B cell (primary cell): ENCODE measurements at regions of chr12 and their contacts with region 1.

Region 1: DNA sequence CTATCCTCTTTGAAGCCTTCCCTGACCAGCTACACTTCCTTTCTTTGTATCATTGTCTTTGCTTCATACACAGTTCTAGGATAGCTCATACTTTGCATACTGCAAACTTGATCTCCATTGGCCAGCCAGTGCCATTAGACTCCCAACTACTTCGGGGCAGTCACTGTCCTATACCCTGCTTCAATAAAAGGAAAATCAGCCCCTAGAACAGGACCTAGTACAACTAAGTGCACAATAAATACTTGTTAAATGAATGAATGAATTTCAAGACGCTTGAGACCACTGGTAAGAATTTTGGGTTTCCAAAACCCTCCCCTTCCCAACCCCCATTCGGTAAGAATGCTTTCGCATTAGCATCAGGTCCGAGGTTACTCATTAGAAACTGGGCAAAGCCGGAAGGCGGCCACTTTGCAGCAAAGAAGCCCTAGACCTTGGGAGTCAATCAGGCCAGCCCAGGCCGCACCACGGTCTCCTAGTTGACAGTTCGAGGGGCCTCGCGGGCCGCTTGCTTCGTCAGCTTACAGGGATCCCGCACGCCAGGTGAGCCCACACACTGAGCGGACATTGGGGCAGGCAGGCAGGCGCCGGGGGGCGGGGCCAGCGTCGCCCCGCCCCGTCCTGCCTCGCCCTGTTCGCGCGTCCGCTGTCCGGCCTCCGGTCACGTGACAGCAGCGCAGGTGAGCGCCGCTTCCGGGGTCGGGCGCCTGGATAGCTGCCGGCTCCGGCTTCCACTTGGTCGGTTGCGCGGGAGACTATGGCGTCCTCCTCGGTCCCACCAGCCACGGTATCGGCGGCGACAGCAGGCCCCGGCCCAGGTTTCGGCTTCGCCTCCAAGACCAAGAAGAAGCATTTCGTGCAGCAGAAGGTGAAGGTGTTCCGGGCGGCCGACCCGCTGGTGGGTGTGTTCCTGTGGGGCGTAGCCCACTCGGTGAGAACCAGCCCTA is at the start of gene PIP4K2C:
- DNase-seq: peak; percentile 89
- ATAC-seq: peak; percentile 98
- H3K4me3 ChIP-seq: peak within 1 kb of the TSS; percentile 70 to 97 (median 78)
- H3K4me3 Mint-ChIP-seq: peak within 1 kb of the TSS; percentile 89
- H3K27ac ChIP-seq: peak within 1 kb of the TSS; percentile 50 to 63
- H3K27ac Mint-ChIP-seq: peak within 1 kb of the TSS; percentile 81
- H3K4me1 ChIP-seq: peaks cover 14 to 21% of the 10 kb centered on the region in 2 donors
- H3K4me1 Mint-ChIP-seq: peaks cover 26% of the 10 kb centered on the region
- H3K27me3 ChIP-seq: peaks cover 0 to 17% (median 7%) of the 10 kb centered on the region in 4 experiments
- H3K27me3 Mint-ChIP-seq: peaks cover 3% of the 10 kb centered on the region
- CTCF ChIP-seq: no peak
- total RNA-seq, gene PIP4K2C: 20.1 and 24.7 TPM in 2 replicates

Region 2: DNA sequence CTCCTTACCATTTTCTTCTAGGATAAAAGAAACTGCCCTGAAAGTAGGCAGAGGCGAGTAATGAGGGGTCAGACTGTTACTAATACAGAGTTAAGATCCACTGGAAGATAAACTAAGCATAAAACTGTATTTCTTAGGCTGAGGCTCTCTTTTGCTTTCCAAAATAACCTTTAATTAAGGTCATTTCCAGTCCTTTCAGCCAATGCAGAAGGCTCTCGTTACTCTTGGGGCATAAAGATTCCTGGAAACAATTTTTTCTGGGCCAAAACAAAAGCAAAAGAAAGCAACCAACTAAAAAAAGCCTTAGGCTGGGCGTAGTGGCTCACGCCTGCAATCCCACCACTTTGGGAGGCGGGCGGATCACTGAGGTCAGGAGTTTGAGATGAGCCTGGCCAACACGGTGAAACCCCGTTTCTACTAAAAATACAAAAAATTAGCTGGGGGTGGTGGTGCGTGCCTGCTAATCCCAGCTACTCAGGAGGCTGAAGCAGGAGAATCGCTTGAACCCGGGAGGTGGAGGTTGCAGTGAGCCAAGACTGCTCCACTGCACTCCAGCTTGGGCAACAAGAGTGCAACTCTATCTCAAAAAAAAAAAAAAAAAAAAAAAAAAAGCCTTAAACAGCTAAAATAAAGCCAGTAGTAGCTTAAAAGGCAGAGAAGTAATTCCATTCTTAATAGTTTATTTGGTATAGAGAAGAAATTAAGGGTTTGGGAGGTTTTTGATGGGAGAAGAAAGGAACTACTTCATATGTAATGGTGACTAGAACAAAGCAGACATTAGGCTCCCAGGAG is 270.9 kb before region 1 on chr12:
- CTCF ChIA-PET with region 1: no interaction called
- POLR2A ChIA-PET with region 1: no interaction called
- intact Hi-C with region 1: no loop called
- DNase-seq: no peak
- ATAC-seq: no peak
- H3K4me3 ChIP-seq: no peak overlapping the region
- H3K4me3 Mint-ChIP-seq: no peak overlapping the region
- H3K27ac ChIP-seq: no peak overlapping the region
- H3K27ac Mint-ChIP-seq: no peak overlapping the region
- H3K4me1 ChIP-seq: no peaks in the 10 kb centered on the region
- H3K4me1 Mint-ChIP-seq: peaks cover 2% of the 10 kb centered on the region
- H3K27me3 ChIP-seq: no peaks in the 10 kb centered on the region
- H3K27me3 Mint-ChIP-seq: no peaks in the 10 kb centered on the region
- CTCF ChIP-seq: no peak

Region 3: DNA sequence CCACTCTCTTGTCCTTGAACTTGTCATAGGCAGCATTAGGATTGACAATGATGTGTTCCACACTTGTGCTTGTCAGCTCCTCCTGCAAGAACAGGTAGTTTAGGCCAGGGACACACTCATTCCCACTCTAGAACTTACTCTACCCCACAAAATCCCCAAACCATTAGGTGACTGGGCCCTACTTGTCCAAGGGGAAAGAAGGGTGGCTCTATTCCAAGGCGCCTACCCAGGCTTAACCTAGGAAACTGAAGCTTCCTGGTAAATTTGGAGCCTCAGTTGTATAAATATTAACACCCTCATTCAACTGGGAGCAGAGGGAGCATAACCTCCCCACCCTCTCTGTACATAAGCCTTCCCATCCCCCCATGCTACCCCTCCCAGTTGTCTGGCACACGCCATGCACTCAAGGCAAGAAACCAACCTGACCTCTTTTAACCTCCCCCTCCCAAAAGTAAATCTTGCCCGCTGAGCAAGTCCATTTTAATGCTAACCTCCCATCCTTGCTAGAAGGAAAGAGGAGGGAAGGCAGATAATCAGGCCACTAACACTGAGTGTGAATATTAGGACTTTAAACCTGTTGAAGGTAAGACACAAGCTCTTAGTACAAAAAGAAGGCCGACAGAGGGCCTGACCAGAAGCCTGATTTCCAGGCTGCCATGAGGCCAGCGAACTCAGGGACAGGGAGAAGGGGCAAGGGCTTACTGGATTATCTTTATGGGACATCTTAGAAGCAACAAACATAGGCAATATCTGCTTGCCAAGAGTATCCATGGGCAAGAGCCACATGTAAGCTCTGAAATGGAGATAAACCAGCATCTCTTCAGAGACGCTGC is 54.8 kb before region 1 on chr12:
- CTCF ChIA-PET with region 1: no interaction called
- POLR2A ChIA-PET with region 1: no interaction called
- intact Hi-C with region 1: no loop called
- DNase-seq: no peak
- ATAC-seq: no peak
- H3K4me3 ChIP-seq: no peak overlapping the region
- H3K4me3 Mint-ChIP-seq: no peak overlapping the region
- H3K27ac ChIP-seq: no peak overlapping the region
- H3K27ac Mint-ChIP-seq: no peak overlapping the region
- H3K4me1 ChIP-seq: no peaks in the 10 kb centered on the region
- H3K4me1 Mint-ChIP-seq: no peaks in the 10 kb centered on the region
- H3K27me3 ChIP-seq: no peaks in the 10 kb centered on the region
- H3K27me3 Mint-ChIP-seq: no peaks in the 10 kb centered on the region
- CTCF ChIP-seq: no peak

Region 4: GRCh38 chr12:57546438-57547383 is 44.1 kb before region 1 on chr12 and contains the start of gene DCTN2:
- CTCF ChIA-PET with region 1: no interaction called
- POLR2A ChIA-PET with region 1: no interaction called
- intact Hi-C with region 1: loop called (anchors 1 kb)
- DNase-seq: peak; percentile 94
- ATAC-seq: peak; percentile 97
- H3K4me3 ChIP-seq: peak within 1 kb of the TSS; percentile 68 to 96 (median 85)
- H3K4me3 Mint-ChIP-seq: peak within 1 kb of the TSS; percentile 99
- H3K27ac ChIP-seq: peak within 1 kb of the TSS; percentile 58 to 90
- H3K27ac Mint-ChIP-seq: peak within 1 kb of the TSS; percentile 87
- H3K4me1 ChIP-seq: peaks cover 21 to 27% of the 10 kb centered on the region in 2 donors
- H3K4me1 Mint-ChIP-seq: peaks cover 51% of the 10 kb centered on the region
- H3K27me3 ChIP-seq: peaks cover 0 to 26% (median 10%) of the 10 kb centered on the region in 4 experiments
- H3K27me3 Mint-ChIP-seq: peaks cover 18% of the 10 kb centered on the region
- CTCF ChIP-seq: no peak
- total RNA-seq, gene DCTN2: 94.3 and 97.6 TPM in 2 replicates

Region 5: DNA sequence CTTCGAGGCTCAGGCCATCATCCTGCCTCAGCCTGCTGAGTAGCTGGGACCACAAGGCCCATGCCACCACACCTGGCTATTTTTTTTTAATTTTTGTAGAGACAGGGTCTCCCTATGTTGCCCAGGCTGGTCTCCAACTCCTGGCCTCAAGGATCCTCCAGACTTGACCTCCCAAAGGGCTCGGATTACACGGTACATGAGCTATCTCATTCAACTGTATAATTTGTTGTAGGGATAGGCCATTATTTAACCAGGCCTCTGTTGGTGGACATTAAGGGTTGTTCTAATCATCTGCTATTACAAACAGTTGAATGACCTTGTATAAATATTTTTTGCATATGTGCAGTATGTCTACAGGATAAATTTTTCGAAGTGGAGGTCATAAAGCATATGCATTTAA is 31.9 kb before region 1 on chr12:
- CTCF ChIA-PET with region 1: no interaction called
- POLR2A ChIA-PET with region 1: no interaction called
- intact Hi-C with region 1: no loop called
- DNase-seq: no peak
- ATAC-seq: no peak
- H3K4me3 ChIP-seq: no peak overlapping the region
- H3K4me3 Mint-ChIP-seq: no peak overlapping the region
- H3K27ac ChIP-seq: no peak overlapping the region
- H3K27ac Mint-ChIP-seq: no peak overlapping the region
- H3K4me1 ChIP-seq: no peaks in the 10 kb centered on the region
- H3K4me1 Mint-ChIP-seq: no peaks in the 10 kb centered on the region
- H3K27me3 ChIP-seq: peaks cover 0 to 10% (median 2%) of the 10 kb centered on the region in 4 experiments
- H3K27me3 Mint-ChIP-seq: peaks cover 23% of the 10 kb centered on the region
- CTCF ChIP-seq: no peak

Region 6: GRCh38 chr12:57611108-57611809 is 20.5 kb after region 1 on chr12 and contains the start of gene ARHGEF25:
- CTCF ChIA-PET with region 1: interaction called, 97 read pairs
- POLR2A ChIA-PET with region 1: interaction called, 4 read pairs
- intact Hi-C with region 1: loop called (anchors 2 kb)
- DNase-seq: no peak
- ATAC-seq: peak; percentile 26
- H3K4me3 ChIP-seq: peak within 1 kb of the TSS in 4 of 5 experiments; percentile 34 to 62 (median 50)
- H3K4me3 Mint-ChIP-seq: peak within 1 kb of the TSS; percentile 81
- H3K27ac ChIP-seq: no peak within 1 kb of the TSS
- H3K27ac Mint-ChIP-seq: no peak within 1 kb of the TSS
- H3K4me1 ChIP-seq: peaks cover 52 to 59% of the 10 kb centered on the region in 2 donors
- H3K4me1 Mint-ChIP-seq: peaks cover 53% of the 10 kb centered on the region
- H3K27me3 ChIP-seq: peaks cover 0 to 71% (median 33%) of the 10 kb centered on the region in 4 experiments
- H3K27me3 Mint-ChIP-seq: peaks cover 45% of the 10 kb centered on the region
- CTCF ChIP-seq: no peak
- total RNA-seq, gene ARHGEF25: 0.15 TPM in 1 of 2 replicates, not detected in the other

Region 7: DNA sequence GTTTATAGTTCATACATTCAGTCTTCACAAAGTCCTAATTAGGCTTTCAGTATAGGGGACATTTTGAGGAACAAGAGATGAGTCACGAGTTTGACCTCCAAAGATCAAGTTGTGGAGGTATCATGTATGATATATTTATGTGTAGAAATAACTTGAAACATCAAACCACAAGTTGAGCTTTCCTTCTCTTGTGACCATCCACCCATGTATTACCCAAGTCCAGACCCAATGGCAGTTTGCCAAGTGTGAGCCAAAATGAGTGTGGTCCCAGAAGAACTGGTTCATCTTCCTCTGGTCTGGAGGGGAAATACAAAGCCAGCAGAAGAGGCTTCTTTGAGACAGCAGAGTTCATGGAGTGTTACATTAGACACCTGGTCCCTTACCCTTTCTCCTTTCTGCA is 455.5 kb after region 1 on chr12:
- CTCF ChIA-PET with region 1: no interaction called
- POLR2A ChIA-PET with region 1: no interaction called
- intact Hi-C with region 1: no loop called
- DNase-seq: no peak
- ATAC-seq: no peak
- H3K4me3 ChIP-seq: no peak overlapping the region
- H3K4me3 Mint-ChIP-seq: no peak overlapping the region
- H3K27ac ChIP-seq: no peak overlapping the region
- H3K27ac Mint-ChIP-seq: no peak overlapping the region
- H3K4me1 ChIP-seq: no peaks in the 10 kb centered on the region
- H3K4me1 Mint-ChIP-seq: no peaks in the 10 kb centered on the region
- H3K27me3 ChIP-seq: peaks cover 0 to 11% (median 2%) of the 10 kb centered on the region in 4 experiments
- H3K27me3 Mint-ChIP-seq: peaks cover 30% of the 10 kb centered on the region
- CTCF ChIP-seq: no peak